GM23248 (cell line): ENCODE measurements at regions of chr11 and their contacts with region 1.

Region 1: DNA sequence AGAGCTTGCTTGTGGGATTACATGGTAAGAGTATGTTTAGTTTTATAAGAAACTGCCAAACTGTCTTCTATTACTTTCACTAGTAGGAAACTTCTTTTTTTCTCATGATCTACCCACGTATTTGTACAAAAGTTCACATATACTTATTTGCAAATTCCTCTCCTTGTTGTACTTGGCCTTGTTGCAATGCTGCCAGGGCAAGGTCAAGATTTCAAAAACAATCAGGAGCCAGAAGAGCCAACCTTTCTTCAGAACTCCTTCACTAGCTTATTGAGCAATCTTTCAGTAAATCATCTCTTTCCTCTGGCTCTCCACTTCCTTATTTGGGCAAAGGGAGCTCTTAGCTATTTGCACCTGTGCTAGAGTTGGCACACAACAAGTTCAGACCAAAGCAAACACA is 9.7 kb downstream of the SRSF8 start:
- DNase-seq: peak; percentile 35
- H3K4me3 ChIP-seq: no peak overlapping the region
- H3K27ac ChIP-seq: no peak overlapping the region
- H3K4me1 ChIP-seq: peaks cover 9% of the 10 kb centered on the region; the same call in 1 of the 2 replicates
- H3K27me3 ChIP-seq: no peaks in the 10 kb centered on the region

Region 2: DNA sequence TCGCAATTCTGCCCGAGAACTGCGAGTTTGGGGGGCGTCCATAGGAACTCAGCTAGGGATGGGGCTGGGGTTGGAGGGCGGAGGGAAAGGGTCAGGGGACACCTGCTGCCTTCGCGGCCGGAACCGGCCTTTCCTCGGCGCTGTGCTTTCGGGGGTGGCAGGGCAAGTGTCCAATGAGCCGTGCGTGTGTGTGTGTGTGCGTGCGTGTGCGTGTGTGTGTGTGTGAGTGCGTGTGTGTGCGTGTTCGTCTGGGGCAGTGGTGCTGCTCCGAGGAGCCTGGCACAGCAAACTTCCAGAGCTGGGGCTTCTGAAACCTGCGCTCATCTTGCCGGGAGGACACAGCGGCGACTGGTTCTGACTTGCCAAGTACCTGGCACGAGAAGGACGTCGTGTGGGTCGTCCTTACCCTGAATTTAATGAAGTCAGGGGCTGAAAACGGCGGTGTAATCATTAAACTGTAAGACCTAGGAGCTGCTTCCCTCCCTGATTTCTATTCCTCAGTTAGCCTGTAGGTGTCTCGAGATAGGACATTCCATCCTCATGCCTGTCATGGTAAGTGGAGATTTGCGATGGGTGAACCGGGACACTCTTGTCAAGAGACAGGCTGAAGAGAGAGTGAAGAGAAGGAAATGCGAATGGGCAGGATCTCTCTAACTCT is 335.3 kb before region 1 on chr11:
- in situ Hi-C with region 1: no loop called
- DNase-seq: peak; percentile 75
- H3K4me3 ChIP-seq: peak overlapping the region; percentile 78
- H3K27ac ChIP-seq: no peak overlapping the region
- H3K4me1 ChIP-seq: peaks cover 19% of the 10 kb centered on the region
- H3K27me3 ChIP-seq: no peaks in the 10 kb centered on the region

Region 3: DNA sequence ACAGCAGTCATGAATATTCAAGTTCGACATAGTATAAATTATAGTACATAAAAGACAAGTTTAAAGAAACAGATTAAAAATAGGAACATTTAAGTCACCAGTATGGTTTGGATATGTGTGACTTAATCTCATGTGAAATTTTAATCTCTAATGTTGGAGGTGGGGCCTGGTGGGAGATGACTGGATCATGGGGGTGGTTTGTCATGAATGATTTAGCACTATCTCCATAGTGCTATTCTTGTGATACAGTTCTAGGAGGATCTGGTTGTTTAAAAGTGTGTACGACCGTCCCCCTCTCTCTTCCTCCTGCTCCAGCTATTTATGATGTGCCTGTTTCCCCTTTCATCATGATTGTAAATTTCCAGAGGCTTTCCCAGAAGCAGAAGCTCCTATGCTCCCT is 48.1 kb before region 1 on chr11:
- in situ Hi-C with region 1: no loop called
- DNase-seq: no peak
- H3K4me3 ChIP-seq: no peak overlapping the region
- H3K27ac ChIP-seq: no peak overlapping the region
- H3K4me1 ChIP-seq: no peaks in the 10 kb centered on the region
- H3K27me3 ChIP-seq: peaks cover 7% of the 10 kb centered on the region; the same call in 1 of the 2 replicates

Region 4: GRCh38 chr11:95241681-95242081 is 165.3 kb after region 1 on chr11:
- in situ Hi-C with region 1: no loop called
- DNase-seq: peak; percentile 56
- H3K4me3 ChIP-seq: 0 out of 2 replicates have a peak overlapping the region, but pooled peaks have one; percentile 4
- H3K27ac ChIP-seq: no peak overlapping the region
- H3K4me1 ChIP-seq: peaks cover 8% of the 10 kb centered on the region; the same call in 1 of the 2 replicates
- H3K27me3 ChIP-seq: no peaks in the 10 kb centered on the region

Region 5: DNA sequence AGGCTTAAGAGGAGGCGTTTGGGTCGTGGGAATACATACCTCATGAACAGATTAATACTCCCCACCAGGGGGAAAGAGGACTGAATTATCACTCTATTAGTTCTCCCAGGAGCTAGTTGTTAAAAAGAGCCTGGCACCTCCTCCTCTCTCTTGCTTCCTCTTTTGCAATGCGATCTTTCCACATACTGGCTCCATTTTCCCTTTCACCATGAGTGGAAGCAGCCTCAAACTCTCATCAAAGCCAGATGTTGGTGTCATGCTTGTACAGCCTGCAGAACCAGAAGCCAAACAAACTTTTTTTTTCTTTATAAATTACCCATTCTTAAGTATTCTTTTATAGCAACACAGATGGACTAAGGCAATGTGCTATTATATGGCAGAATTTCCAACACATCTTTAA is 454.7 kb after region 1 on chr11:
- in situ Hi-C with region 1: no loop called
- DNase-seq: peak; percentile 70
- H3K4me3 ChIP-seq: no peak overlapping the region
- H3K27ac ChIP-seq: no peak overlapping the region
- H3K4me1 ChIP-seq: peaks cover 9% of the 10 kb centered on the region
- H3K27me3 ChIP-seq: no peaks in the 10 kb centered on the region

Region 6: GRCh38 chr11:95764267-95764898 is 688.0 kb after region 1 on chr11:
- in situ Hi-C with region 1: loop called (anchors 10 kb)
- DNase-seq: peak; percentile 84
- H3K4me3 ChIP-seq: no peak overlapping the region
- H3K27ac ChIP-seq: no peak overlapping the region
- H3K4me1 ChIP-seq: peaks cover 23% of the 10 kb centered on the region
- H3K27me3 ChIP-seq: no peaks in the 10 kb centered on the region